ENCODE measurements at regions of chr10 and their contacts with region 1.

Region 1: DNA sequence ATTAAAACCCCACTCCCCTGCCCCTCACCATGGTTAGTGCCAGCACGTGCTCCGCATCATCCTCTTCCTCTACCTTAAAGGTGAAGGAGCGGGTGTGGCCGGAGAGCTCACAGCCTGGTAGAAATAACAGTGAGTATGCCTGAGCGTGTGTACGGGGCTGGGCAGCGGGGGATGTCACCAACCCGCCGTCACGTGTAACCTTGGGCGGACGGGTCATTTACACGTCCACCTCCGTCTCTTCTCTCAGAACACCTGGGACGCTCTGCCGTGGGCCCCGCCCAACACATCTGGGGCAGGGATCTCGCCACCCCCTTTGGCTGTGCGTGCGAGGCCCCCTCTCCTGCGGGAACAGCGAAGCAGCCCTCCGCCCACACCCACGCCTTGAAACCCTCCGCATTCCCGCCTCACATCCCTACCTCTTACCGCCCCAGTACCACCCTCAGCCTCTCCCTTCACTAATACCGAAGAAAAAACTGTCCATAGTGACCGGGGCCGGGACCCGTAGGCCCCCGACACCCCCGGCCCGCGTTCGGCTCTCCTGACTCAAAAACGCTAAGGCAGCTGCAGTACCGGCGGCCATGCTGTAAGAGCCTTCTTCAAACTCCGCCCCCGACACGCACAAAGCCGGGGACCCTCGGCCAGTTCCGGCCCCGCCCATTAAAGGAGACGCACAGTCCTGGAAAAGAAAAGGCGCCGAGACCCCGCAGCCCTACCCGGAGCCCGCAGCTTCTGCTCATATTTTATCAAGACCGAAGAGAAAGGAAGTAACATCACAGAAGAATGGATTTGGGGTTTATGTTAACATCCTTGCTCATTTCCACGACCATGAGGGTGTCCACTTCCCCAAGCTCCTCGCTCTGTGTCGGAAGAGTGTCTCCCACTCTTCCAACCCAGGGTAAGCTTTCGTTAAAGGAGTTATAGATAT is at the start of gene NPM3:
- DNase-seq: peak; percentile 19 to 31 (median 30)
- H3K4me3 ChIP-seq: peak within 1 kb of the TSS; percentile 51 to 79 (median 62)
- H3K4me3 Mint-ChIP-seq: peak within 1 kb of the TSS; percentile 99
- H3K27ac ChIP-seq: peak within 1 kb of the TSS; percentile 14 to 59
- H3K27ac Mint-ChIP-seq: peak within 1 kb of the TSS; percentile 47 to 92 (median 82)
- H3K4me1 ChIP-seq: peaks cover 35 to 52% of the 10 kb centered on the region in 2 donors
- H3K4me1 Mint-ChIP-seq: peaks cover 47% of the 10 kb centered on the region
- H3K27me3 ChIP-seq: peaks cover 11 to 17% of the 10 kb centered on the region in 2 donors
- H3K27me3 Mint-ChIP-seq: peaks cover 16 to 26% (median 19%) of the 10 kb centered on the region in 3 donors
- CTCF ChIP-seq: no peak
- polyA plus RNA-seq, gene NPM3: 1.2 to 8.1 (median 3.8) TPM

Region 2: GRCh38 chr10:101214446-101215396 is 568.4 kb before region 1 on chr10:
- intact Hi-C with region 1: loop called (anchors 5 to 10 kb)
- DNase-seq: peak in 2 of 3 donors; percentile 19 to 44
- H3K4me3 ChIP-seq: peak overlapping the region in 1 of 3 experiments; percentile 64
- H3K4me3 Mint-ChIP-seq: peak overlapping the region in 1 of 2 donors; percentile 84
- H3K27ac ChIP-seq: no peak overlapping the region
- H3K27ac Mint-ChIP-seq: no peak overlapping the region
- H3K4me1 ChIP-seq: peaks cover 11 to 18% of the 10 kb centered on the region in 2 donors
- H3K4me1 Mint-ChIP-seq: peaks cover 26% of the 10 kb centered on the region
- H3K27me3 ChIP-seq: peaks cover 62 to 95% of the 10 kb centered on the region in 2 donors
- H3K27me3 Mint-ChIP-seq: peaks cover 93 to 99% (median 97%) of the 10 kb centered on the region in 3 donors
- CTCF ChIP-seq: peak; percentile 93

Region 3: DNA sequence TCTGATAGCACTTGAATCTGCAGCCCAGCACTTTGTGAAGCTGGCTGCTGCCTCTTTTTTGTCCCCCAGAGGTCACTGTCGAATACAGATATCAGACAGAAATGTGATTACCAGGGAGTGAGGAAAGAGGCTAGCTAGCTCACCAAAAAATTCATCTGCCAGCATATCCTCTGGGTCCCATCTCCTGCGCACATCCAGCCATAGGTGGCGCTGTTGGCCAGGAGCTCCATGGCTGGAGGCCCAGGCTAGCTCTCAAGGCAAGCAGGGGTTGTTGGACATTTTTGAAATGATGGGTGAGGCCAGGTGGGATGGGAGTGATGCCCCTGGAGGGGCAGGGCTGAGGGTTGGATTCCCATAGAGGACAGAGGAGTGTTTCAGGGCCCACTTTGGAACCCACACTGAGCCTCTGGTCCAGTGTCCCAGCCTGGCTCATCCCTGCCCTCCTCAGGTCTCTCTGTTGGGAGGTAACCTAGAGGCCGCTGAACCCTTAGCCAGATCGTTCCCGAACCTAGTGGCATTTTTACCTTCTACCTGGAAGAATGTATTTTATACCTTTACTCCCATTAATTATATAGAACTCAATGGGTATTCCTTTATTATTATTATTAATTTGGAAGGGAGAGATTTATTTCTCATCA is 180.2 kb before region 1 on chr10:
- intact Hi-C with region 1: loop called (anchors 5 kb)
- DNase-seq: peak; percentile 43 to 58 (median 48)
- H3K4me3 ChIP-seq: no peak overlapping the region
- H3K4me3 Mint-ChIP-seq: no peak overlapping the region
- H3K27ac ChIP-seq: no peak overlapping the region
- H3K27ac Mint-ChIP-seq: peak overlapping the region in 1 of 7 donors; percentile 70
- H3K4me1 ChIP-seq: no peaks in the 10 kb centered on the region
- H3K4me1 Mint-ChIP-seq: no peaks in the 10 kb centered on the region
- H3K27me3 ChIP-seq: no peaks in the 10 kb centered on the region
- H3K27me3 Mint-ChIP-seq: peaks cover 0 to 1% (median 0%) of the 10 kb centered on the region in 3 donors
- CTCF ChIP-seq: peak; percentile 92

Region 4: GRCh38 chr10:101817337-101818118 is 34.5 kb after region 1 on chr10:
- intact Hi-C with region 1: no loop called
- DNase-seq: peak in 2 of 3 donors; percentile 21 to 32
- H3K4me3 ChIP-seq: peak overlapping the region; percentile 86 to 97 (median 88)
- H3K4me3 Mint-ChIP-seq: peak overlapping the region; percentile 94 to 98
- H3K27ac ChIP-seq: peak overlapping the region; percentile 70 to 89
- H3K27ac Mint-ChIP-seq: peak overlapping the region; percentile 91 to 96 (median 93)
- H3K4me1 ChIP-seq: peaks cover 28 to 42% of the 10 kb centered on the region in 2 donors
- H3K4me1 Mint-ChIP-seq: peaks cover 46% of the 10 kb centered on the region
- H3K27me3 ChIP-seq: no peaks in the 10 kb centered on the region
- H3K27me3 Mint-ChIP-seq: no peaks in the 10 kb centered on the region
- CTCF ChIP-seq: no peak

Region 5: GRCh38 chr10:101941871-101942270 is 158.8 kb after region 1 on chr10:
- intact Hi-C with region 1: no loop called
- DNase-seq: no peak
- H3K4me3 ChIP-seq: no peak overlapping the region
- H3K4me3 Mint-ChIP-seq: no peak overlapping the region
- H3K27ac ChIP-seq: no peak overlapping the region
- H3K27ac Mint-ChIP-seq: no peak overlapping the region
- H3K4me1 ChIP-seq: peaks cover 13 to 23% of the 10 kb centered on the region in 2 donors
- H3K4me1 Mint-ChIP-seq: peaks cover 24% of the 10 kb centered on the region
- H3K27me3 ChIP-seq: no peaks in the 10 kb centered on the region
- H3K27me3 Mint-ChIP-seq: peaks cover 0 to 2% (median 0%) of the 10 kb centered on the region in 3 donors
- CTCF ChIP-seq: no peak

Region 6: GRCh38 chr10:102064868-102065560 is 281.9 kb after region 1 on chr10 and contains the start of gene HPS6:
- intact Hi-C with region 1: loop called in 1 of 2 experiments (anchors 5 kb)
- DNase-seq: peak; percentile 85 to 88 (median 86)
- H3K4me3 ChIP-seq: peak within 1 kb of the TSS; percentile 64 to 92 (median 80)
- H3K4me3 Mint-ChIP-seq: peak within 1 kb of the TSS; percentile 81 to 94
- H3K27ac ChIP-seq: peak within 1 kb of the TSS; percentile 49 to 87
- H3K27ac Mint-ChIP-seq: peak within 1 kb of the TSS; percentile 80 to 92 (median 88)
- H3K4me1 ChIP-seq: peaks cover 44 to 50% of the 10 kb centered on the region in 2 donors
- H3K4me1 Mint-ChIP-seq: peaks cover 44% of the 10 kb centered on the region
- H3K27me3 ChIP-seq: no peaks in the 10 kb centered on the region
- H3K27me3 Mint-ChIP-seq: peaks cover 1 to 4% (median 1%) of the 10 kb centered on the region in 3 donors
- CTCF ChIP-seq: no peak
- polyA plus RNA-seq, gene HPS6: 2.9 to 27.3 (median 23.6) TPM

Region 7: GRCh38 chr10:102347241-102347828 is 564.3 kb after region 1 on chr10:
- intact Hi-C with region 1: no loop called
- DNase-seq: no peak
- H3K4me3 ChIP-seq: no peak overlapping the region
- H3K4me3 Mint-ChIP-seq: no peak overlapping the region
- H3K27ac ChIP-seq: no peak overlapping the region
- H3K27ac Mint-ChIP-seq: peak overlapping the region in 3 of 7 donors; percentile 10 to 65 (median 36)
- H3K4me1 ChIP-seq: no peaks in the 10 kb centered on the region
- H3K4me1 Mint-ChIP-seq: no peaks in the 10 kb centered on the region
- H3K27me3 ChIP-seq: no peaks in the 10 kb centered on the region
- H3K27me3 Mint-ChIP-seq: no peaks in the 10 kb centered on the region
- CTCF ChIP-seq: no peak

Region 8: GRCh38 chr10:102615361-102615760 is 832.3 kb after region 1 on chr10:
- intact Hi-C with region 1: no loop called
- DNase-seq: peak; percentile 20 to 46 (median 31)
- H3K4me3 ChIP-seq: no peak overlapping the region
- H3K4me3 Mint-ChIP-seq: no peak overlapping the region
- H3K27ac ChIP-seq: no peak overlapping the region
- H3K27ac Mint-ChIP-seq: peak overlapping the region in 4 of 7 donors; percentile 10 to 72 (median 14)
- H3K4me1 ChIP-seq: no peaks in the 10 kb centered on the region
- H3K4me1 Mint-ChIP-seq: peaks cover 2% of the 10 kb centered on the region
- H3K27me3 ChIP-seq: no peaks in the 10 kb centered on the region
- H3K27me3 Mint-ChIP-seq: peaks cover 0 to 4% (median 0%) of the 10 kb centered on the region in 3 donors
- CTCF ChIP-seq: peak; percentile 40

Measured in CD14-positive monocyte (primary cell).